ENCODE measurements at regions of chr17 and their contacts with region 1.

Region 1: GRCh38 chr17:65231662-65232335 is 94.6 kb downstream of the RGS9 start:
- DNase-seq: peak; percentile 63 to 77 (median 67)
- H3K4me3 ChIP-seq: no peak overlapping the region
- H3K27ac ChIP-seq: no peak overlapping the region
- H3K4me1 ChIP-seq: peaks cover 8 to 28% (median 24%) of the 10 kb centered on the region in 4 experiments
- H3K27me3 ChIP-seq: peaks cover 0 to 83% (median 32%) of the 10 kb centered on the region in 5 experiments

Region 2: DNA sequence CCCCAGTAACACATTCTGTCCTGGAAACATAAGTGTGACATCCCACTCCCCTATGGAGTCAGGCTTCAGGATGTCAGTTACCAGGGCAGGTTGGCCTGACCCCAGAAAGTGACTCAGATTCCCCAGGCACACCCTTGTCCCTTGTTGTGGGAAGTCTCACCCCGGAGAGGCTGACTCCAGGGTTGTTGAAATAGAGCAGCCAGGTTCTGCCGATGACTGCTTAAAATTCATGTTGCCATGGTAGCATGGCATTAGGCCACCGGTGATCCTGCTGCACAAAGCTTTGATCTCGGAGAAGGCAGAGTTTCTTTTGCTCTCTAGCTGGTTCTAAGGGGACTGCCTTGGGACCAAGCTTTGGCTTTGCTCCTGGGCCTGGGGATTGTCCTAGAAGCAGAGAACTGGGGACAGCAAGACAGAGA is 12.0 kb after region 1 on chr17:
- CTCF ChIA-PET with region 1: interaction called, 11 read pairs
- POLR2A ChIA-PET with region 1: interaction called, 3 read pairs
- DNase-seq: no peak
- H3K4me3 ChIP-seq: no peak overlapping the region
- H3K27ac ChIP-seq: no peak overlapping the region
- H3K4me1 ChIP-seq: no peaks in the 10 kb centered on the region
- H3K27me3 ChIP-seq: peaks cover 0 to 77% (median 38%) of the 10 kb centered on the region in 5 experiments

Region 3: DNA sequence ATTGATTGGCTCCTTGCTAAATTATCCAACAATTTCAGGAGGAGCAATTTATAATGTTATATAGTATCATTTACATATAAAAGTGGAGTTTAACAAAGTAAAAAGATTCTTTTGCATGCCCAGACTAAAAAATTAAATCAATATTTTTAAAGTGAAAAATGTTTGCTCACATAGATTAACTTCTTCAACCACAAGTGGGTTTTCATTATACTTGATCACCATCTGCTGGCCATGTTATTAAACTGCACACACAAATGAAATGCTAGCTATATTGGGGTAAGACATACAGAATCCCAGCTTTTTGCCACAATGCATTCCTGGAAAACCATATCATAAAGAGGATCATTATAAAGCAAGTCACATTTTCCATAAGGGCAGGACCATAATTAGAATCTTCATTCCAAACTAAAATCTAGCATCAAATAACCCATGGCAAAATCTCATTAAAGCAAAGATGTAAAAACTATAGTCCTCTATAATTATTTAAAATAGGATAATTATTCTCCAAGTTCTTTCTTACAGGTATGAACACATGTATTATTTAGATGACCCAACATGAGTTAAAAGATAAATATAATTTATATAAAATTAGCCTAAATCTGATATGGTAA is 933.8 kb after region 1 on chr17:
- CTCF ChIA-PET with region 1: interaction called, 45 read pairs
- POLR2A ChIA-PET with region 1: no interaction called
- DNase-seq: peak; percentile 54 to 71 (median 59)
- H3K4me3 ChIP-seq: no peak overlapping the region
- H3K27ac ChIP-seq: no peak overlapping the region
- H3K4me1 ChIP-seq: no peaks in the 10 kb centered on the region
- H3K27me3 ChIP-seq: no peaks in the 10 kb centered on the region

Measured in common myeloid progenitor, CD34-positive (primary cell).